IMR-90 (cell line): ENCODE measurements at regions of chr13 and their contacts with region 1.

Region 1: DNA sequence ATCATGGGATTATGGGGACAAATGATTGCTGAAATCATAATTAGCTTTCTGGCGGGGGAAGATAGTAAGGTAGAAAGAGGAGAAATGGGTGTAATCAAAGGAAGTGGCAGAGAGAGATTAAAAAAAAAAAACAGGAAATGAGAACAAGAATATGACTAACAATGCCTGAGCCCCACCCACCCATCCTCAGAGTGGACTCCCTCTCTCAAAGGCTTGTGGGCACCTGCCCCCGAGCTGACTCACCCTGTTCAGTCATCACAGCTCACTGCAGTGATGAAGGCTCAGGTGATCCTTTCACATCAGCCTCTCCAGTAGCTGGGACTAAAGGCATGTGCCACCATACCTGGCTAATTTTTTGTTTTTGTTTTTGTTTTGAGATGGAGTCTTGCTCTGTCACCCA is 26.4 kb upstream of the TPT1 start:
- DNase-seq: peak; percentile 94
- ATAC-seq: peak; percentile 44; the same call in 1 of the 2 replicates
- H3K4me3 ChIP-seq: no peak overlapping the region
- H3K27ac ChIP-seq: no peak overlapping the region
- H3K4me1 ChIP-seq: peaks cover 3% of the 10 kb centered on the region
- H3K27me3 ChIP-seq: no peaks in the 10 kb centered on the region
- CTCF ChIP-seq: no peak
- POLR2A ChIP-seq: no peak
- RAD21 ChIP-seq: no peak

Region 2: DNA sequence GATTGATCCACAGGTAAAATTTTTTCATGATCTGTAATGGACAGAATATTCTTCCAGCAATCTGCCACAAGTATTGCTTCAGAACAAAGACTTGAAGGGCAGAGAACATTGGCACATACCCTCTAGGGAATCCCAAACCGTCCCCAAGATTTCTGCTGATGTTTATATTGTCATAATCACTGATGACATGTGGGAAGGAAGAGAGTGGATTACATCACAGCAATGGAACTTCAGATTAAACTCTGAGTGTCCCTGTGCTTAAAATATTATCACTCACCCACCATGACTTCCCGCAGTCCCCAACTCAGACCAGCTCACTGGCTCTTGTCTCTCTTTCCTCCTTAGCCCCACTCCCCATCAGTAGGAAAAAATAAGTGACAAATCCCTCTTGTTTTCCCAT is 17.9 kb before region 1 on chr13:
- CTCF ChIA-PET with region 1: no interaction called
- POLR2A ChIA-PET with region 1: no interaction called
- dilution Hi-C with region 1: no loop called
- in situ Hi-C with region 1: no loop called
- intact Hi-C with region 1: no loop called
- DNase-seq: peak; percentile 51
- ATAC-seq: peak; percentile 59
- H3K4me3 ChIP-seq: no peak overlapping the region
- H3K27ac ChIP-seq: no peak overlapping the region
- H3K4me1 ChIP-seq: peaks cover 2% of the 10 kb centered on the region; the same call in 1 of the 2 replicates
- H3K27me3 ChIP-seq: no peaks in the 10 kb centered on the region
- CTCF ChIP-seq: no peak
- POLR2A ChIP-seq: no peak
- RAD21 ChIP-seq: no peak

Region 3: GRCh38 chr13:45412274-45413049 is 45.1 kb after region 1 on chr13:
- CTCF ChIA-PET with region 1: no interaction called
- POLR2A ChIA-PET with region 1: no interaction called
- dilution Hi-C with region 1: no loop called
- in situ Hi-C with region 1: no loop called
- intact Hi-C with region 1: loop called (anchors 5 kb)
- DNase-seq: peak; percentile 69
- ATAC-seq: peak; percentile 54
- H3K4me3 ChIP-seq: no peak overlapping the region
- H3K27ac ChIP-seq: no peak overlapping the region
- H3K4me1 ChIP-seq: peaks cover 6% of the 10 kb centered on the region
- H3K27me3 ChIP-seq: no peaks in the 10 kb centered on the region
- CTCF ChIP-seq: no peak
- POLR2A ChIP-seq: no peak
- RAD21 ChIP-seq: no peak

Region 4: DNA sequence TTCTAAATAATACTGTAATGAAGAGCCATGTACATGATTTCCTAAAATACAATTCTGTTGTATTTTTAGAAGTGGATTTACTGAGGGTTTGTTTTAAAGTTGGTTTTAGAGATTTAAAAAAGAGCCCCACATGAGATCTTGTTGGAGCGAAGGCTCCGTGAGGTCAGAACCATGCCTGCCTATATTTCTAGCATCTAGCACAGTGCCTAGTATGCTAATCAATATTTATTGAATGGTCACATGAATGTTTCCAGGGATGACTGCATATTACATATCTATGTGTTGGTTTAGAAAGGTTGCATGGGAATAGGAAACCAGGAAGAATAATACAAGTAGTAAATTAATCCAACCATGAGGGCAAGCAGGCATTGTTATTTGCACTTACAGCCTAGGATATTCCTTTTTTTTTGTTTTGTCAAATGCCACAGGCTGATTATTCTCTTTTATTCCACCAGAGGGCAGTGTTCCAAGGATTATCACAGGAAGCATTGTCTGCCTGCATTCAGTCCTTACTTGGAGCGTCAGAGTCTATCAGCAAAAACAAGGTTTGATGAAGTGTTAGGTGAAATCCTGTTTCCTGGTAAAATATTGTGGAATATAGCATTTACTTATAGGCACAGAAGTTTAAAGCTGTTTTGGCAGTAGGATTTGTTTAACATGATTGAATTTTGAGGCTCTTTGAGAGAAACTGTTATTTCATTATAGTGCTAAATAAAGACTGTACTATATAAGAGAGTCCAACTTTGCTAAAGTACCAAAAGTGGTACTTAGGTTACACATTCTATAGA is 144.1 kb after region 1 on chr13:
- CTCF ChIA-PET with region 1: interaction called, 3 read pairs
- POLR2A ChIA-PET with region 1: no interaction called
- dilution Hi-C with region 1: no loop called
- in situ Hi-C with region 1: no loop called
- intact Hi-C with region 1: loop called (anchors 5 kb)
- DNase-seq: peak; percentile 83
- ATAC-seq: peak; percentile 91
- H3K4me3 ChIP-seq: no peak overlapping the region
- H3K27ac ChIP-seq: no peak overlapping the region
- H3K4me1 ChIP-seq: peaks cover 3% of the 10 kb centered on the region; the same call in 1 of the 2 replicates
- H3K27me3 ChIP-seq: no peaks in the 10 kb centered on the region
- CTCF ChIP-seq: peak; percentile 80
- POLR2A ChIP-seq: no peak
- RAD21 ChIP-seq: peak; percentile 64

Region 5: GRCh38 chr13:45623515-45624090 is 256.2 kb after region 1 on chr13:
- CTCF ChIA-PET with region 1: no interaction called
- POLR2A ChIA-PET with region 1: no interaction called
- dilution Hi-C with region 1: no loop called
- in situ Hi-C with region 1: no loop called
- intact Hi-C with region 1: loop called (anchors 5 kb)
- DNase-seq: peak; percentile 16
- ATAC-seq: peak; percentile 51
- H3K4me3 ChIP-seq: no peak overlapping the region
- H3K27ac ChIP-seq: no peak overlapping the region
- H3K4me1 ChIP-seq: no peaks in the 10 kb centered on the region
- H3K27me3 ChIP-seq: peaks cover 29% of the 10 kb centered on the region
- CTCF ChIP-seq: peak; percentile 50
- POLR2A ChIP-seq: no peak
- RAD21 ChIP-seq: peak; percentile 40

Region 6: DNA sequence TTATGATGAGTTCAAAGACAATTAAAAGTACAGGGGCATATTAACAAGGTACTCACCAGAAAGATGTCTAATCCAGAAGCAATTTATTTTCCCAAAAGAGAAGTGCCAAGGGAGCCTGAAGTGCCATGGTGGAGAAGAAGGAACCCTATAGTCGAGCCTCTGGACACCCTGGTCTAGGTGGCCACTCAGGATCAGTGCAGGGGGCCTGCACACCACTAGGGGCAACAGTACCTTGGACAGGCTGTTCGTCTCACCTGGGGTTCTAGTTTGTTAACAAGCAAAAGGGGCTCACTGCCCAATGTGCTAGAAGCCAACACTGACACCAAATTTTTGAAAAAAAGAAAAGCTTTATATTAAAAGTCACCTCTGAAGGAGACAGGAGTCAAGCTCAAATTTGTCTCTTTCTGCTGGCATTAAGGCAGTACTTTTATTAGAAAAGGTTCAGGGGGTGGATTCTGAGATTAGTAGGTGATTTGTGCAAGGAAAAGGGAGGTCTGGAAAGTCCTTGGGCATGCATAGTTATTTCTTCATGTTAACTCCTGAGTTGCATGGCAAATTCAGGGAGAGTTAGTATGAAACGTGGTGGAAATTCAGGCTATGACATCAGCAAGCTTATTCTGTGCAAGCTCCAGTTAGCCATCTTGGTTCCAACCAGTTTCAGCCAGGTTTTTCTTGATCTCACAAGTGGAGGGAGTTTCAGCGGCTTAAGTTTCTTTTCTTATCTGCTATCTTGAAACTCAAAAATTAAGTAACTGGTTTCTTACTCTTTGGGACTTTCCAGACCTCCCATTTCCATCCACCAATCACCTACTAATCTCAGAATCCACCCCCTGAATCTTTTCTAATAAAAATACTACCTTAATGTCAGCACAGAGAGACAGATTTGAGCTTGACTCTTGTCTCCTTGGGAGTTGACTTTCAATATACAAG is 333.9 kb after region 1 on chr13:
- CTCF ChIA-PET with region 1: no interaction called
- POLR2A ChIA-PET with region 1: no interaction called
- dilution Hi-C with region 1: no loop called
- in situ Hi-C with region 1: no loop called
- intact Hi-C with region 1: no loop called
- DNase-seq: no peak
- ATAC-seq: no peak
- H3K4me3 ChIP-seq: no peak overlapping the region
- H3K27ac ChIP-seq: no peak overlapping the region
- H3K4me1 ChIP-seq: no peaks in the 10 kb centered on the region
- H3K27me3 ChIP-seq: peaks cover 4% of the 10 kb centered on the region
- CTCF ChIP-seq: no peak
- POLR2A ChIP-seq: no peak
- RAD21 ChIP-seq: no peak

Region 7: DNA sequence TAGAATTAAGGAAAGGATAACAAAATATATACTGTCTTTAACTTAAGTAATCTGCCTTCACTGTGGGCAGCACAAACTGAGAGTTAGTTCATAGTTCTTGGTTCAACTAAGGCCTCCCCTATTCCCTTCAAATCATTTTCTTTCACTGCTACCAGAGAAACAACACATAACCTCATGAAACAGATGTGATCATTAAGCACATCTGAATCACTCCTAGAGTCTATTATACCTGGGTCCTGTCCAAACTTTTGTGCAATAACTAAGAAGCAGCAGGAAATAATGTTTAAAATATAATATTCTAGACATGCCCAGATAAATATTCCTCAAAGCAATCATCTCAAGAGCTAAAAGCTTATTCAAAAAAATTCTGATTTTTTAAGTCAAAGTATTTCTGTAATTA is 622.2 kb after region 1 on chr13:
- CTCF ChIA-PET with region 1: no interaction called
- POLR2A ChIA-PET with region 1: no interaction called
- dilution Hi-C with region 1: no loop called
- in situ Hi-C with region 1: loop called (anchors 25 kb)
- intact Hi-C with region 1: no loop called
- DNase-seq: peak; percentile 86
- ATAC-seq: peak; percentile 94
- H3K4me3 ChIP-seq: no peak overlapping the region
- H3K27ac ChIP-seq: peak overlapping the region; percentile 29; the same call in 1 of the 2 replicates
- H3K4me1 ChIP-seq: peaks cover 2% of the 10 kb centered on the region; the same call in 1 of the 2 replicates
- H3K27me3 ChIP-seq: no peaks in the 10 kb centered on the region
- CTCF ChIP-seq: no peak
- POLR2A ChIP-seq: no peak
- RAD21 ChIP-seq: no peak

Region 8: DNA sequence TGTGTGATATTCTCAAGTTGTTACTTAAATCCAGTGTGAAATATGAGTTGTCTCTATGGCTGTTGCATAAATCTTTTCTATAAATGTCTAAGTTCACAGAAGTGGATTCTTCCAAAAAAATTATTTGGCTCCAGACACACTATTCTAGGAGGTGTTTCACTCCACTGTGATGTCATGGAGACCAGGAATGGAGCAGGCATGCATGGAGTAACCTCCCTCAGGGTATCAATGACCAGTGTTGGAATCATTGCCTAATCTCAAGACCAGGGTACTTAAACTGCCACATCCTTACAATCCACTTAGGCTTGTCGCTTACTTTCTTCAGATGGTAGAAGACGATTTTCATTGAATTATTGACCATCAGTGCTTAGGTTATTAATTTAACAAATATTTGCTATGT is 899.8 kb after region 1 on chr13:
- CTCF ChIA-PET with region 1: no interaction called
- POLR2A ChIA-PET with region 1: no interaction called
- dilution Hi-C with region 1: no loop called
- in situ Hi-C with region 1: no loop called
- intact Hi-C with region 1: no loop called
- DNase-seq: no peak
- ATAC-seq: no peak
- H3K4me3 ChIP-seq: no peak overlapping the region
- H3K27ac ChIP-seq: no peak overlapping the region
- H3K4me1 ChIP-seq: no peaks in the 10 kb centered on the region
- H3K27me3 ChIP-seq: peaks cover 1% of the 10 kb centered on the region
- CTCF ChIP-seq: no peak
- POLR2A ChIP-seq: no peak
- RAD21 ChIP-seq: no peak